Activated CD8-positive, alpha-beta T cell treated with anti-CD3 and anti-CD28 coated beads for 36 hours (primary cell): ENCODE measurements at regions of chr10 and their contacts with region 1.

Region 1: GRCh38 chr10:43292755-43293676 is 26.2 kb upstream of the RASGEF1A start:
- DNase-seq: peak; percentile 62
- ATAC-seq: peak; percentile 67
- H3K4me3 Mint-ChIP-seq: no peak overlapping the region
- H3K27ac Mint-ChIP-seq: peak overlapping the region; percentile 60
- H3K4me1 Mint-ChIP-seq: peaks cover 28% of the 10 kb centered on the region
- H3K27me3 Mint-ChIP-seq: no peaks in the 10 kb centered on the region
- CTCF ChIP-seq: peak; percentile 74

Region 2: GRCh38 chr10:42801135-42801534 is 491.9 kb before region 1 on chr10:
- CTCF ChIA-PET with region 1: no interaction called
- POLR2A ChIA-PET with region 1: no interaction called
- intact Hi-C with region 1: no loop called
- DNase-seq: no peak
- ATAC-seq: peak; percentile 60
- H3K4me3 Mint-ChIP-seq: no peak overlapping the region
- H3K27ac Mint-ChIP-seq: peak overlapping the region; percentile 78
- H3K4me1 Mint-ChIP-seq: peaks cover 14% of the 10 kb centered on the region
- H3K27me3 Mint-ChIP-seq: no peaks in the 10 kb centered on the region
- CTCF ChIP-seq: no peak

Region 3: GRCh38 chr10:43304687-43305340 is 11.8 kb after region 1 on chr10:
- CTCF ChIA-PET with region 1: interaction called, 52 read pairs
- POLR2A ChIA-PET with region 1: no interaction called
- intact Hi-C with region 1: no loop called
- DNase-seq: peak; percentile 78
- ATAC-seq: peak; percentile 48
- H3K4me3 Mint-ChIP-seq: peak overlapping the region; percentile 59
- H3K27ac Mint-ChIP-seq: no peak overlapping the region
- H3K4me1 Mint-ChIP-seq: peaks cover 45% of the 10 kb centered on the region
- H3K27me3 Mint-ChIP-seq: peaks cover 18% of the 10 kb centered on the region
- CTCF ChIP-seq: no peak

Region 4: DNA sequence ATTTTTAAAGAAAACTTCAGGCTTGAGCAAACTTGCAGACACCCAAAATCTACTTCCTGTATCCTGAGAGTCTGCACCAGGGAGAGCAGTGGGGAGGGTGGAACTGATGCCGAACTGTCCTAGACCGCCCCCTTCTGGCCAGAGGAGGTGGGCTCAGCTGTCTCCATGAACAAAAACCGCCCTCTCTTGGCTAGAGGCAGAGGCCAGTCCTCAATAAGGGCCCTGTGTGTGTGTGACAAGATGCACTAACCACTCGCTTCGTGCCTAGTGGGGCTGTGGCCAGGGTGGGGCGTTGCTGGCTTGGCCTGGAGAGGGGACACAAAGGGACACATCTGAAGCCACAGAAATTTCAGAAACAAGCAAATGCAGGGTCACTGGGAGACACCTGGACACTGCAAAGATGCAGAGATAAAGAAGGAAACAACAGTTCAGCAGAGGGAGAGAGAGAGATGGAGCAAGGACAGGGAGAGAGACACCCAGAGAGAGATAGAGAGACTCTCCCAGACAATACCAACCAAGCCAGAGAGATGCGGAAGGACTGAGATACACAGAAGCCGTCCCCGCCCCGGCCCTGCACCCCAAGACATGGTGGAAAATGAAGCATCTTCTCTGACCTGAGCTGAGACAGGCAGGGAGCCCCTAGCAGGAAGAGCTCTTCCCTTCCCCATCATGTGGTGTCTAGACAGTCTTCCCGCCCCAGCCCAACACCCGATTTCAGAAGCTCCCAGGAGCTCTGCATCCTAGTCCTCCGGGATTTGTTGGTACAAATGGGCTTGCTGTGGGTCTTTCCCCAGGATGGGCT is 55.7 kb after region 1 on chr10:
- CTCF ChIA-PET with region 1: interaction called, 68 read pairs
- POLR2A ChIA-PET with region 1: no interaction called
- intact Hi-C with region 1: loop called (anchors 1 kb)
- DNase-seq: peak; percentile 92
- ATAC-seq: peak; percentile 100
- H3K4me3 Mint-ChIP-seq: no peak overlapping the region
- H3K27ac Mint-ChIP-seq: peak overlapping the region; percentile 12
- H3K4me1 Mint-ChIP-seq: peaks cover 8% of the 10 kb centered on the region
- H3K27me3 Mint-ChIP-seq: peaks cover 11% of the 10 kb centered on the region
- CTCF ChIP-seq: peak; percentile 95

Region 5: DNA sequence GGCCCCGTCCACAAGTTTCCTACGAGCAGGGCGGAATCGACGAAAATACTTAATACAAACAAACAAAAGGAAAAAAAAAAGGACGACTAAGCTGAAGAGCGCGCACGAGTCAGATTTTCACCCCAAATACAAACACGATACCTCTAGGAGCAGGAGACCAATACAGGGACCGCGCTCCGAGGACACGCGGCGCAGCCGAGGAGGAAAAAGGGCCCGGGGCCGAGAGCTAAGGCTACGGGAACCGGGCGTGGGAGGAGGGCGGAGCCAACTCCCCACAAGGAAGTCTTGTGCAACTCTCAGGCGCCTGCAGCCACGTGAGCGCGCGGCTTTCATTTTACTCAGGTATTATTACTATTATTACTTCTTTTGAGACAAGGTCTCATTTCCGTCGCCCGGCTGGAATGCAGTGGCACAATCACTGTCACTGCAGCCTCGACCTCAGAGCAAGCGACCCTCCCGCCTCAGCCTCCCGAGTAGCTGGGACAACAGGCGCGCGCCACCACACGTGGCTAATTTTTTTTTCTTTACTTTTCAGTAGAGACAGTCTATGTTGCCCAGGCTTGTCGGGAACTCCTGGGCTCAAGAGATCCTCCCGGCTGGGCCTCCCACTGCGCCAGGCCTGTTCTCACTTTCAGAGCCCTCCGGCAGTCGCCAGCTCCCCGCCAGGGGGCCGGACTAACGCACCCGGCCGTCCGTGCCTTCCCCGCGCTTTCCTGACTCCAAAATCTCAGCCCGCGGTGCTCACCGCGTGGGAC is 114.7 kb after region 1 on chr10:
- CTCF ChIA-PET with region 1: no interaction called
- POLR2A ChIA-PET with region 1: no interaction called
- intact Hi-C with region 1: no loop called
- DNase-seq: peak; percentile 97
- ATAC-seq: peak; percentile 35
- H3K4me3 Mint-ChIP-seq: peak overlapping the region; percentile 99
- H3K27ac Mint-ChIP-seq: peak overlapping the region; percentile 100
- H3K4me1 Mint-ChIP-seq: peaks cover 24% of the 10 kb centered on the region
- H3K27me3 Mint-ChIP-seq: no peaks in the 10 kb centered on the region
- CTCF ChIP-seq: peak; percentile 56

Region 6: GRCh38 chr10:43461950-43462349 is 168.9 kb after region 1 on chr10:
- CTCF ChIA-PET with region 1: interaction called, 29 read pairs
- POLR2A ChIA-PET with region 1: no interaction called
- intact Hi-C with region 1: loop called (anchors 1 kb)
- DNase-seq: peak; percentile 38
- ATAC-seq: peak; percentile 82
- H3K4me3 Mint-ChIP-seq: no peak overlapping the region
- H3K27ac Mint-ChIP-seq: no peak overlapping the region
- H3K4me1 Mint-ChIP-seq: peaks cover 5% of the 10 kb centered on the region
- H3K27me3 Mint-ChIP-seq: no peaks in the 10 kb centered on the region
- CTCF ChIP-seq: peak; percentile 75